CD8-positive, alpha-beta memory T cell (primary cell): ENCODE measurements at regions of chr7 and their contacts with region 1.

Region 1: DNA sequence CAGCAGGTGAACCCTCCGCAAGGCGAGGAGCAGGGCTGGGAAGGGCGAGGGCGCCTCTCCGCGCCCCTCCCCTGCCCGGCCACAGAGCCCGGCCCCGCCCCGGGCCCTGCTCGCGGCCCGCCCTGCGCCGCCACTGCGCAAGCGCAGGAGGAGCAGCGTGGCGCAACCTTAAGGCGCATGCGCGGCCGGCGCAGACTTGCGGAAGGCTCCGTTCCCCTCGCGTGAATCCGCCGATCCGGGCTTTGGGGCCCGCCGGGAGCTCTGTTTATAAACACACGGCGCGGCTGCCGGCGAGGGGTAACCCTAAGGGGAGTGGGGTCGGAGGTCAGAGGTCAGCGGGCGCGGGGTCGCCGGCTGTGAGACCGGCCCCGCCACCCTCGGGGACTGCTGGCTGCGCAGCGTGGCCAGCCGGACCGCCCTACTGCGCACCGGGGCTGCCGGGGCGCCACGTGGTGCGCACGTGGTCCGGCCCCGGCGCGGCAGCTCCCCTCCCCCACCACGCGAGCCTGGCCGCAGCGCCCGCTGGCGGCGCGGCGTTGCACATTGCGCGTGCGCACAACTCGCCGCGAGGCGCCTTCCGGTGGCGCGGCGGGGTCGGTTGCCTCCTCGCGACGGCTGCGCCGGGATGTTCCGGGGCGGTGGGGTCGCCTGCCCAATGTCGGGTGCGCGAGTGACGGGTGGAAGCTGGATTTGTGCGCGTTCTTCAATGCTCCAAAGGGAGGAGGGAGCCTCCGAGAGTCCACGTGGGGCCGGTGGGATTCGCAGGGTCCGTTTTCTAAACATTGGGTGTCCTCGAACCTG is 40.2 kb upstream of the FOXK1 start:
- DNase-seq: peak; percentile 91 to 99 (median 97)
- H3K4me3 ChIP-seq: peak overlapping the region; percentile 76
- H3K4me3 Mint-ChIP-seq: peak overlapping the region; percentile 76 to 92 (median 89)
- H3K27ac ChIP-seq: peak overlapping the region; percentile 81
- H3K27ac Mint-ChIP-seq: peak overlapping the region; percentile 59 to 96 (median 94)
- H3K4me1 ChIP-seq: peaks cover 7% of the 10 kb centered on the region
- H3K4me1 Mint-ChIP-seq: peaks cover 12 to 18% (median 16%) of the 10 kb centered on the region in 3 donors
- H3K27me3 ChIP-seq: no peaks in the 10 kb centered on the region
- H3K27me3 Mint-ChIP-seq: peaks cover 0 to 11% of the 10 kb centered on the region in 2 donors

Region 2: DNA sequence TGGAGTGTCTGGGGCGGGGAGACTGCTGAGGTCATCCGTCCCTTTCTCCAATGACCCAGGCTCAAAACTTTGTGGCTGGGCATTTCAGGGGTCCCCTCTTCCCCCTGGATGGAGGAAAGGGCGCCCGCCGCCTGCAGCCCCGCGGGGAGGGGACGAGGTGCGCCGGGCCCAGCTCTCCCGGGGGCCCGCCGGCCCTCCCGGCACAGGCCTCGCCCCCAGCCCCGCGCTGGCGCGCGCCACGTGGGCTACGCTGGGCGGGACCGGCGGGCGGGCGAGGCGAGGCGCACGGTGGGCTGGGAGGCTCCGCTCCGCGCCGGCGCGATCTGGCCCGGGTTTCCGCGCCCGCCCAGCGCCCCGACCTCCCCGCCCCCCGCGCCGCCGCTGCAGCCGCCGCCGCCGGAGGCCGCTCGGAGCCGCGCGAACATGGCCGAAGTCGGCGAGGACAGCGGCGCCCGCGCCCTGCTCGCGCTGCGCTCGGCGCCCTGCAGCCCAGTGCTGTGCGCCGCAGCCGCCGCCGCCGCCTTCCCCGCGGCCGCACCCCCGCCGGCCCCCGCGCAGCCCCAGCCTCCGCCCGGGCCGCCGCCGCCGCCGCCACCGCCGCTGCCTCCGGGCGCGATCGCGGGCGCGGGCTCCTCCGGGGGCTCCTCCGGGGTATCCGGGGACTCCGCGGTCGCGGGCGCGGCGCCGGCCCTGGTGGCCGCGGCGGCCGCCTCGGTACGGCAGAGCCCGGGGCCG is 40.2 kb after region 1 on chr7 and contains the start of gene FOXK1:
- CTCF ChIA-PET with region 1: interaction called, 42 read pairs
- POLR2A ChIA-PET with region 1: interaction called, 58 read pairs
- DNase-seq: peak; percentile 70 to 82 (median 75)
- H3K4me3 ChIP-seq: peak within 1 kb of the TSS; percentile 57
- H3K4me3 Mint-ChIP-seq: peak within 1 kb of the TSS; percentile 87 to 100 (median 97)
- H3K27ac ChIP-seq: peak within 1 kb of the TSS; percentile 78
- H3K27ac Mint-ChIP-seq: peak within 1 kb of the TSS; percentile 87 to 100 (median 96)
- H3K4me1 ChIP-seq: peaks cover 30% of the 10 kb centered on the region
- H3K4me1 Mint-ChIP-seq: peaks cover 28 to 35% (median 35%) of the 10 kb centered on the region in 3 donors
- H3K27me3 ChIP-seq: no peaks in the 10 kb centered on the region
- H3K27me3 Mint-ChIP-seq: peaks cover 4 to 8% of the 10 kb centered on the region in 2 donors
- total RNA-seq, gene FOXK1: 35.6 to 38.4 TPM

Region 3: GRCh38 chr7:4744391-4745264 is 102.8 kb after region 1 on chr7:
- CTCF ChIA-PET with region 1: interaction called, 7 read pairs
- POLR2A ChIA-PET with region 1: interaction called, 11 read pairs
- DNase-seq: peak; percentile 69 to 83 (median 75)
- H3K4me3 ChIP-seq: peak overlapping the region; percentile 52
- H3K4me3 Mint-ChIP-seq: peak overlapping the region; percentile 76 to 91 (median 83)
- H3K27ac ChIP-seq: peak overlapping the region; percentile 93
- H3K27ac Mint-ChIP-seq: peak overlapping the region; percentile 90 to 97 (median 95)
- H3K4me1 ChIP-seq: peaks cover 45% of the 10 kb centered on the region
- H3K4me1 Mint-ChIP-seq: peaks cover 45 to 71% (median 67%) of the 10 kb centered on the region in 3 donors
- H3K27me3 ChIP-seq: no peaks in the 10 kb centered on the region
- H3K27me3 Mint-ChIP-seq: no peaks in the 10 kb centered on the region

Region 4: DNA sequence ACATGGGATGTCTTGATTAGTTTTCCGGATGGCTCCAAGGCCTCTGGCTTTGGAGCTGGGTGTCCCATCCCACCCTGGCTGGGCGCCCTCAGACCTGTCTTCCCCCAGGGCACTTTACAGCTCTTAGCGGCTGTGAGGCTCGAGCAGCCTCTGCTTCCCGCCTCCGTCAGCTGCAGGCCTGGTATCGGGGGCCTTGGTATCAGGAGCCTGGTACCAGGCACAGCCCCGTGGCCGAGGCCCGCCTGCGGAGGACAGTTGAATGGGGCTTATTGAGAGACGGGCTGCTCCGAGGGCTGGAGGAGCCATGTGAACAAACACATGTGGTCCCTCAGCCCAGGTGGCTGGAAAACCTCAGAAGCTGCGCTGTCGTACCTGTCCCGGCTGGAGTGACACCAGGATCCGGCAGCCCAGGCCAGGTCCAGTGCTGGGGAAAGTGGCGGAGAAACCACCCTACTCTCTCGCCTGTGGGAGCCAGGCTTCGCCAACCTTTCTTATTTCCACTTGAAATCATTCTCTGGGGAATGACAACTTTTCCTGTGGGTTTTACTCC is 109.6 kb after region 1 on chr7:
- CTCF ChIA-PET with region 1: interaction called, 11 read pairs
- POLR2A ChIA-PET with region 1: interaction called, 5 read pairs
- DNase-seq: no peak
- H3K4me3 ChIP-seq: no peak overlapping the region
- H3K4me3 Mint-ChIP-seq: no peak overlapping the region
- H3K27ac ChIP-seq: no peak overlapping the region
- H3K27ac Mint-ChIP-seq: peak overlapping the region in 1 of 8 donors; percentile 10
- H3K4me1 ChIP-seq: peaks cover 37% of the 10 kb centered on the region
- H3K4me1 Mint-ChIP-seq: peaks cover 20 to 41% (median 33%) of the 10 kb centered on the region in 3 donors
- H3K27me3 ChIP-seq: no peaks in the 10 kb centered on the region
- H3K27me3 Mint-ChIP-seq: no peaks in the 10 kb centered on the region

Region 5: GRCh38 chr7:4775250-4775847 is 133.5 kb after region 1 on chr7 and contains the start of gene AP5Z1:
- CTCF ChIA-PET with region 1: interaction called, 8 read pairs
- POLR2A ChIA-PET with region 1: interaction called, 33 read pairs
- DNase-seq: peak; percentile 95 to 97 (median 96)
- H3K4me3 ChIP-seq: peak within 1 kb of the TSS; percentile 100
- H3K4me3 Mint-ChIP-seq: peak within 1 kb of the TSS; percentile 97 to 99 (median 99)
- H3K27ac ChIP-seq: peak within 1 kb of the TSS; percentile 93
- H3K27ac Mint-ChIP-seq: peak within 1 kb of the TSS; percentile 97 to 99 (median 99)
- H3K4me1 ChIP-seq: peaks cover 32% of the 10 kb centered on the region
- H3K4me1 Mint-ChIP-seq: peaks cover 33 to 59% (median 46%) of the 10 kb centered on the region in 3 donors
- H3K27me3 ChIP-seq: no peaks in the 10 kb centered on the region
- H3K27me3 Mint-ChIP-seq: peaks cover 0 to 2% of the 10 kb centered on the region in 2 donors
- total RNA-seq, gene AP5Z1: 47.8 to 49.8 TPM